ENCODE measurements at regions of chr21 and their contacts with region 1.

Region 1: DNA sequence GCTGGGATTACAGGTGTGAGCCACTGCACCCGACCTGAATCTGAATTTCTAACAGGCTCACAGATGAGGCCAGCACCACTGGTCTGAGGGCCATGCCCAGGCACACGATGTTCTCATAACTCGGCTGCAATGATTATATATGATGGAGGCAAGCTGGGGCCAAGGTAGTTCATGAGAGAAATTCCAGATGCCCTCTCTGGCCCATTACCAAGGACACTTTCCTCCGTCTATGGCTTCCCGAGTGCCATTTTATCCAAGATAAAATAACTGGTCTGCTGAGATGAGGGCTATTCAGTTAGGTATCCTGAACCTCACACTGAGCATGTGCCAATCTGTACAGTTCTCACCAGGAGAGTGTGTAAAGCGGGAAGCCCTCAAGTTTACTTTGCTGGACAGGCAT is 16.5 kb downstream of the TMPRSS2 start:
- DNase-seq: no peak
- H3K4me3 ChIP-seq: no peak overlapping the region
- H3K27ac ChIP-seq: no peak overlapping the region
- H3K4me1 ChIP-seq: peaks cover 0 to 5% (median 0%) of the 10 kb centered on the region in 4 donors
- H3K27me3 ChIP-seq: peaks cover 0 to 47% (median 0%) of the 10 kb centered on the region in 4 donors
- CTCF ChIP-seq: no peak
- EP300 ChIP-seq: no peak
- POLR2A ChIP-seq: no peak

Region 2: DNA sequence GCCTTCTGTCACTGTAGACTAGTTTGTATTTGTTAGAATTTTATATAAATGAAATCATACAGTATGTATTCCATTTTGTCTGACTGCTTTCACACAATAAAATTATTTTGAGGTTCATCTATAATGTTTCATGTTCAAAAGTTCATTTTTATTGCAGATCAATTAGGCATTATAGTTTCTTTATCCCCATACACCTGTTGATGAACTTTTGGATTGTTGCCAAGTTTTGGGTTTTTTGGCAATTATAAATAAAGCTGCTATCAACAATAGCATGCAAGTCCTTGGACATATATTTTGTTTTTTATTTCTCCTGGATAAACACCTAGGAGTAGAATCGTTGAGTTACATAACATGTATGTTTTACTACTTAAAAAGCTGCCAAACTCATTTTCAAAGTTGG is 221.9 kb before region 1 on chr21:
- intact Hi-C with region 1: no loop called
- DNase-seq: no peak
- H3K4me3 ChIP-seq: no peak overlapping the region
- H3K27ac ChIP-seq: no peak overlapping the region
- H3K4me1 ChIP-seq: no peaks in the 10 kb centered on the region
- H3K27me3 ChIP-seq: no peaks in the 10 kb centered on the region
- CTCF ChIP-seq: no peak
- EP300 ChIP-seq: no peak
- POLR2A ChIP-seq: no peak

Region 3: DNA sequence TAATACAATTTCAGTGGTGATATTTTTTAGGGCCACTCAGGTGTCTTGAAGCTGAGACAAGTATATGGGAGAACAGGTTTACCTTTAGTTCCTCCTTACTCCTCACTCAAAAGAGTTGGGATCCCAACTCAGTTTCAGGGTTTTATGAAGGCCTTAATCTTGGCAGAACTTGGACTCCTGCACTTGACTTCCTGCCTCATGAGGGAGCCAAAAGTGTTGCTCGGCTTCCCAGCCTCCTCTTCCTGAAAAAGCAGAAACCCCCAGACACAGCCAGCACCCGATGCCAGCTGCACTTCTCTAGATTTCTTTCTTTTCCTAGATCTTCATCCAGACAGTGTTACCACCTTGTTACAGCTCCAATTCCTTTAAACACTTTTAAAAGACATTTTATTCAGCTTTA is 87.3 kb after region 1 on chr21:
- intact Hi-C with region 1: loop called (anchors 5 kb)
- DNase-seq: no peak
- H3K4me3 ChIP-seq: no peak overlapping the region
- H3K27ac ChIP-seq: no peak overlapping the region
- H3K4me1 ChIP-seq: no peaks in the 10 kb centered on the region
- H3K27me3 ChIP-seq: peaks cover 0 to 17% (median 0%) of the 10 kb centered on the region in 4 donors
- CTCF ChIP-seq: no peak
- EP300 ChIP-seq: no peak
- POLR2A ChIP-seq: no peak

Region 4: GRCh38 chr21:42002421-42002958 is 511.1 kb after region 1 on chr21:
- intact Hi-C with region 1: no loop called
- DNase-seq: peak; percentile 55
- H3K4me3 ChIP-seq: no peak overlapping the region
- H3K27ac ChIP-seq: no peak overlapping the region
- H3K4me1 ChIP-seq: peaks cover 0 to 3% (median 0%) of the 10 kb centered on the region in 4 donors
- H3K27me3 ChIP-seq: no peaks in the 10 kb centered on the region
- CTCF ChIP-seq: no peak
- EP300 ChIP-seq: no peak
- POLR2A ChIP-seq: no peak

Measured in esophagus muscularis mucosa (tissue), 4 donors.